Activated naive CD4-positive, alpha-beta T cell treated with anti-CD3 and anti-CD28 coated beads for 36 hours (primary cell): ENCODE measurements at regions of chr20 and their contacts with region 1.

Region 1: DNA sequence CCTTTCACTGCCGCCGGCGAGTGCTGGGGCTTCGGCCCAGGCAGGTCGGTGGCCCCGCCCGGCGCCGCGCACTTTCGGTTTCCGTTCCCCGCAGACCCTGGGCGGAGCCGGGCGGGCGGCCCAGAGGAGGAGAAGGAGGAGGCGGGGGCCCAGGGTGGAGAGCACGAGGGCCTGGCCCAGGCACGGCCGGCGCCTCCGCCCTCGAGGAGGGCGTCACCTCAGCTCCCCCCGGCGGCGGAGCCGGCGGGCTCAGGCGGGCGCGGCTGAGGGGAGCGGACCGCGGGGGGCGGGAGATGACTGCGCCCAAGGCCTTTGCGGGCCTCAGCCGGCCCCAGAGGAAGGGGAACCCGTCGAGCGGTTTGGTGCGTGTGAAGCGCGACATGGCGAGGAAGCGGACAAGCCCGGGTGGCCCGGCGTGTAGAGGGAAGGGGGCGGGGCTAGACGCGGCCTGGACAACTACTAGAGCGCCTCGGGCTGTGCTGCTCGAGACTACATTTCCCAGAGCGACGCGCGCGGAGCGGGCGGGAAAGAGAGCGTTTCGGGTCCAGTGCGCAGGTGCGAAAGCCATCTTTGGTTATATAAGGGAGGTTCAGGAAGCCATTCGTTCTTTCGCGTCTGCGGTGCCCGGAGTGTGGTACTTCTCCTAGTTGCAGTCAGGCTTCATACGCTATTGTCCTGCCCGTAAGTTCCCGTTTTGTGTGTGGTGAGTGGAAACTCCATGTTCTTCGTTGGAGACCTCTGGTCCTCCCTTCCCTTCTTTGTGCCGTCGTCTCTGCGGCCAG is at the start of gene ZNFX1:
- DNase-seq: peak; percentile 99
- H3K4me3 Mint-ChIP-seq: peak within 1 kb of the TSS; percentile 99
- H3K27ac Mint-ChIP-seq: peak within 1 kb of the TSS; percentile 100
- H3K4me1 Mint-ChIP-seq: peaks cover 62% of the 10 kb centered on the region
- H3K27me3 Mint-ChIP-seq: no peaks in the 10 kb centered on the region
- total RNA-seq, gene ZNFX1: 18.2 to 19.0 TPM

Region 2: GRCh38 chr20:48738399-48739304 is 539.6 kb before region 1 on chr20:
- CTCF ChIA-PET with region 1: no interaction called
- intact Hi-C with region 1: loop called (anchors 1 kb)
- DNase-seq: peak; percentile 88
- H3K4me3 Mint-ChIP-seq: no peak overlapping the region
- H3K27ac Mint-ChIP-seq: peak overlapping the region; percentile 79
- H3K4me1 Mint-ChIP-seq: peaks cover 32% of the 10 kb centered on the region
- H3K27me3 Mint-ChIP-seq: no peaks in the 10 kb centered on the region

Region 3: GRCh38 chr20:49046087-49046900 is 231.9 kb before region 1 on chr20 and contains the start of gene CSE1L:
- CTCF ChIA-PET with region 1: no interaction called
- intact Hi-C with region 1: loop called (anchors 1 kb)
- DNase-seq: peak; percentile 96
- H3K4me3 Mint-ChIP-seq: peak within 1 kb of the TSS; percentile 98
- H3K27ac Mint-ChIP-seq: peak within 1 kb of the TSS; percentile 99
- H3K4me1 Mint-ChIP-seq: peaks cover 38% of the 10 kb centered on the region
- H3K27me3 Mint-ChIP-seq: no peaks in the 10 kb centered on the region
- total RNA-seq, gene CSE1L: 86.1 to 88.9 TPM

Region 4: GRCh38 chr20:49219089-49219923 is 58.9 kb before region 1 on chr20 and contains the start of gene DDX27:
- CTCF ChIA-PET with region 1: no interaction called
- intact Hi-C with region 1: loop called (anchors 1 kb)
- DNase-seq: peak; percentile 98
- H3K4me3 Mint-ChIP-seq: peak within 1 kb of the TSS; percentile 94
- H3K27ac Mint-ChIP-seq: peak within 1 kb of the TSS; percentile 95
- H3K4me1 Mint-ChIP-seq: peaks cover 25% of the 10 kb centered on the region
- H3K27me3 Mint-ChIP-seq: no peaks in the 10 kb centered on the region
- total RNA-seq, gene DDX27: 40.6 to 41.2 TPM

Region 5: DNA sequence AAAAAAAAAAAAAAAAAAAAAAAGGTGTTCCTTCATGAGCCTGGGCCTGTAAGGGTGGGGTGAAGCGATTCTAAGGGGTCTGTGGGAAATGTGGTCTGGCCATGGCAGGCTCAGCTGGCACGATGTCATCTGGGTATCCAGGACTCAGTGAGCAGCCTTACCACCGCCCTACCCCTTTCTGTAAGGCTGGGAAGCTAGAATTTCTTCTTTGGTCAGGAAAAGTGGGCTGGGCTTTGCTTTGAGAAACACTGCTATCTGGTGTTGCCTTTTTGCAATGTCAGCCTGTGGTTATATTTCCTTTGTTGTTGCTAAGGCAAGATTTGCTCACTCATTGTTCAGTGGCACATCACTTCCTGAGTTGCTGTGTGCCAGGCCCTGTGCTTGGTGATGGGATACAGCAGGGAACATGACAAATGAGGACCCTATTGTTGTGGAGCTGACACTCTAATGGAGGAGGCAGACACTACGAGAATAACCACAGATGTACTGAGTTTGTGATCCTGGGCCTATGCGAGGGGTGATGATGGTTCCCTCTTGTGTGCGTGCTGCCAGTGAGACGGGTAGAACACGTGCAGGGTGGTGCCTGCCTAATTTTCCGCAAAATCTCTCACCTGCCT is 45.5 kb after region 1 on chr20:
- CTCF ChIA-PET with region 1: interaction called, 4 read pairs
- intact Hi-C with region 1: loop called (anchors 2 kb)
- DNase-seq: peak; percentile 49
- H3K4me3 Mint-ChIP-seq: no peak overlapping the region
- H3K27ac Mint-ChIP-seq: no peak overlapping the region
- H3K4me1 Mint-ChIP-seq: peaks cover 18% of the 10 kb centered on the region
- H3K27me3 Mint-ChIP-seq: peaks cover 27% of the 10 kb centered on the region